Activated CD4-positive, alpha-beta T cell treated with anti-CD3 and anti-CD28 coated beads for 36 hours (primary cell): ENCODE measurements at regions of chrX and their contacts with region 1.

Region 1: GRCh38 chrX:30781711-30782444 is 107.2 kb downstream of the TAB3 start:
- DNase-seq: no peak
- ATAC-seq: peak; percentile 81
- H3K4me3 Mint-ChIP-seq: no peak overlapping the region
- H3K27ac Mint-ChIP-seq: peak overlapping the region; percentile 37
- H3K4me1 Mint-ChIP-seq: peaks cover 29% of the 10 kb centered on the region
- H3K27me3 Mint-ChIP-seq: peaks cover 13% of the 10 kb centered on the region

Region 2: GRCh38 chrX:30615229-30615628 is 166.6 kb before region 1 on chrX:
- CTCF ChIA-PET with region 1: no interaction called
- POLR2A ChIA-PET with region 1: no interaction called
- intact Hi-C with region 1: loop called in 1 of 2 experiments (anchors 1 kb)
- DNase-seq: no peak
- ATAC-seq: peak; percentile 100
- H3K4me3 Mint-ChIP-seq: no peak overlapping the region
- H3K27ac Mint-ChIP-seq: no peak overlapping the region
- H3K4me1 Mint-ChIP-seq: peaks cover 6% of the 10 kb centered on the region
- H3K27me3 Mint-ChIP-seq: peaks cover 1% of the 10 kb centered on the region

Region 3: GRCh38 chrX:30673127-30673796 is 108.6 kb before region 1 on chrX:
- CTCF ChIA-PET with region 1: no interaction called
- POLR2A ChIA-PET with region 1: no interaction called
- intact Hi-C with region 1: no loop called
- DNase-seq: no peak
- ATAC-seq: no peak
- H3K4me3 Mint-ChIP-seq: no peak overlapping the region
- H3K27ac Mint-ChIP-seq: no peak overlapping the region
- H3K4me1 Mint-ChIP-seq: no peaks in the 10 kb centered on the region
- H3K27me3 Mint-ChIP-seq: no peaks in the 10 kb centered on the region

Region 4: GRCh38 chrX:30831082-30831481 is 49.2 kb after region 1 on chrX:
- CTCF ChIA-PET with region 1: no interaction called
- POLR2A ChIA-PET with region 1: no interaction called
- intact Hi-C with region 1: loop called (anchors 1 kb)
- DNase-seq: peak; percentile 55
- ATAC-seq: peak; percentile 91
- H3K4me3 Mint-ChIP-seq: peak overlapping the region; percentile 34
- H3K27ac Mint-ChIP-seq: no peak overlapping the region
- H3K4me1 Mint-ChIP-seq: peaks cover 37% of the 10 kb centered on the region
- H3K27me3 Mint-ChIP-seq: no peaks in the 10 kb centered on the region

Region 5: GRCh38 chrX:30881797-30882196 is 99.9 kb after region 1 on chrX:
- CTCF ChIA-PET with region 1: no interaction called
- POLR2A ChIA-PET with region 1: no interaction called
- intact Hi-C with region 1: loop called in 1 of 2 experiments (anchors 2 kb)
- DNase-seq: no peak
- ATAC-seq: peak; percentile 23
- H3K4me3 Mint-ChIP-seq: no peak overlapping the region
- H3K27ac Mint-ChIP-seq: peak overlapping the region; percentile 31
- H3K4me1 Mint-ChIP-seq: peaks cover 53% of the 10 kb centered on the region
- H3K27me3 Mint-ChIP-seq: no peaks in the 10 kb centered on the region